ENCODE measurements at regions of chr10 and their contacts with region 1.

Region 1: DNA sequence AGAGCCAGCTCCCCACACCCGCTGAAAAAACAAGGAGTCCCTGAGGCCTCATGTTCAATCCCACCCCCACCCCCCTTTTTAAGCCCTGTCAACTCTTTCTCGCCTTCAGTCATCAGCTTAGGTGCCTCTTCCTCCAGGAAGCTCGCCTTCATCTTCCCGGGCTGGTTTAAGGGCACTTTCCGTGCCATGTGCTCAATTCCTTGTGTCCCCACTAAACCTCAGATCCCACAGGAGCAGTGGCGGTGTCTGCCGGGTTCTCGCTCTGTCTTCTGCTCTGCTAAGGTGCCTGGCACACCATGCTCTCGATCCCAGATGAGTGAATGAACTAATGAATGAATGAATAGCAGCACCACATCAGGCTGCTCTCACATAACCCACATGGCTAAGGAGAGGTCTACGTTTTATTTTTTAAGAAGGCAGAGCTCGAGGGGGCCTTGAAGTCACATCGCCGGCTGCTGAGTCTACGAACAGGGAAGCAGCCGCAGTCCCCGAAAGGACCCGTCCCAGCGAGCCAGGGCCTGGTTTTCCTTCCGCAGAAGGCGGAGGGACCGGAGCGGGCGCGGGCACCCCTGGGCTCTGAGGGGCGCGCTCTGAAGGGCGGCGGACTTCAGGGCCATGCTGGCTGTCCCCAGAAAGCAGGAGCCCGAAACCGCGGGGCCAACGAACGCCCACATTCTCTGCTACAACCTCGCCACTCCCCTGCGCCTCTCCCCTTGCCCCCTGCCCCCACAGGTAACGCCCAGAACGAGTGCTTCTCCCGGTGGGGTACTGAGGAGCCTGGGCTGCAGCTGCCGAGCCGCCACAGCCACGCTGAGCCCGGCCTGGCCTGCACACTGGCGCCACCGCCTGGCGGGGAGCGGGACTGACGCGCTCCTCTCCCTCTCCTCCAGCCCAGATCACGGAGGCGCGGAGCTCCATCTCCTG is 73.4 kb upstream of the KCNMA1 start:
- DNase-seq: peak; percentile 77
- H3K27ac ChIP-seq: no peak overlapping the region; the same call in 1 of the 2 replicates
- CTCF ChIP-seq: peak; percentile 99

Region 2: GRCh38 chr10:77173615-77174461 is 537.2 kb before region 1 on chr10:
- CTCF ChIA-PET with region 1: interaction called, 52 read pairs
- POLR2A ChIA-PET with region 1: no interaction called
- DNase-seq: peak; percentile 74
- H3K27ac ChIP-seq: no peak overlapping the region
- CTCF ChIP-seq: peak; percentile 91

Region 3: GRCh38 chr10:77603534-77603927 is 107.5 kb before region 1 on chr10:
- CTCF ChIA-PET with region 1: no interaction called
- POLR2A ChIA-PET with region 1: no interaction called
- DNase-seq: peak; percentile 17
- H3K27ac ChIP-seq: peak overlapping the region; percentile 48
- CTCF ChIP-seq: no peak

Region 4: DNA sequence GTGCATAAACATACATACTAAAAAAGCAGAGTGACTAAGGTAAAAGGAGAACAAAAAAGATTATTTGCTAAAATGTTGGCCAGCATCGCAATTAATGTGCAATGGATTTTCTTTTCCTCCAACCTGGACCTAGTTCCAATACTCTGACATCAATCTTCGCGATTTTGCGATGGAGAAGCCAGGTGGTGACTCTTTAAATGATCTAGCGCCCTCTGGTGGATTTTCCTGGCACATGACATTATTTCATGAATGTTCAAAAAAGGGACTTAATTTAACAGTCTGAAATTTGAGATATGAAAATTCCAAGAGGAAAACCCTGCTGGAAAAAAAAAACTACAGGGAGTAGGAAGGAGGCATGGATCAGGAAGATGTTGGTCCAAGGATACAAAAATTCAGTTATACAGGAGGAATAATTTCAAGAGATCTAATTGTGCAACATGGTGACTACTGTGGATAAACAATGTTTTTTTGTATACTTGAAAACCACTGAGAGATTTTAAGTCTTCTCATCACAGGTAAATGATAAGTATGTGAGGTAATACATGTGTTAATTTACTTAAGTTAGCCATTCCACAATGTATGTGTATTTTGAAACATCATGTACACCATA is 69.1 kb before region 1 on chr10:
- CTCF ChIA-PET with region 1: interaction called, 16 read pairs
- POLR2A ChIA-PET with region 1: no interaction called
- DNase-seq: peak; percentile 77
- H3K27ac ChIP-seq: no peak overlapping the region
- CTCF ChIP-seq: peak; percentile 82

Region 5: GRCh38 chr10:77692782-77693181 is 18.2 kb before region 1 on chr10:
- CTCF ChIA-PET with region 1: interaction called, 29 read pairs
- POLR2A ChIA-PET with region 1: no interaction called
- DNase-seq: peak; percentile 57
- H3K27ac ChIP-seq: no peak overlapping the region
- CTCF ChIP-seq: no peak

Region 6: GRCh38 chr10:77756319-77757232 is 45.6 kb after region 1 on chr10:
- CTCF ChIA-PET with region 1: interaction called, 22 read pairs
- POLR2A ChIA-PET with region 1: no interaction called
- DNase-seq: peak; percentile 70
- H3K27ac ChIP-seq: no peak overlapping the region
- CTCF ChIP-seq: peak; percentile 72

Region 7: DNA sequence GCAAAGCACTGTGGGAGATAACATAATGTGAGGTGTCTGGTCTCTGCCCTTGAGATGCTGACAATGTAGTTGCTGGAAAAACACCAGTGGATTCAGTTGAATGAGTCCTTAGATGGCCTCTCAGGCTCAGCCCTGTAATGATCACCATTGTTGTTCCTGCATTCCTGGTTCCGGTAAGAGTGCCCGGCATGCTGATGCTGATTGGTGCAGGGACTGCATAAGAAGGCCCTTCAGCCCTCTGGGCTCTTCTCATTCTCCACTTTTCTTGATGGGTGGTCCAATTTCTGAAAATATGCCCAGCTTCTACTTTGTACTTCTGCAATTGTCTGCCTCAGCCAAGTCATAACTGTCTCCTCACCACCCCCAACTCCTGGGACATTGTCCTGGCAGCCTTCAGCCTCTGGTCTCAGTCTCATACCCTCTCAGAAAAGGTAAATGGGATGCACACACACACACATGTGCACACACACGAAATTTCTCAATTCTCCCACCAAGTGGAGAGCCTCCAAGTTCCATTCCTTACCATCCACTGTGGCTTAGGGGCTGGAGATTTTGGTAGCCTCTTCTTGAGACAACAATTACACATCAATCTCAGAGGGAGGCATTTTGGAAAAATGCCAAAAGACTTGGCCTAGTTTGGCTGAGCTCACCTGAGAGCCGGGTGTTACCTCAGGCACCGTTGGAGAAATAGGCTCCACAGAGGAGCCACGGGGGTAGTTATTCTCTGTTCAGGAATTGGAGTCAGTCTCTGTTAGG is 637.6 kb after region 1 on chr10:
- CTCF ChIA-PET with region 1: no interaction called
- POLR2A ChIA-PET with region 1: no interaction called
- DNase-seq: no peak
- H3K27ac ChIP-seq: no peak overlapping the region
- CTCF ChIP-seq: no peak

Measured in RWPE1 (cell line).